GM23248 (cell line): ENCODE measurements at regions of chr15 and their contacts with region 1.

Region 1: GRCh38 chr15:78429477-78429876 is 8.5 kb upstream of the IREB2 start:
- DNase-seq: no peak
- H3K4me3 ChIP-seq: no peak overlapping the region
- H3K27ac ChIP-seq: no peak overlapping the region
- H3K4me1 ChIP-seq: no peaks in the 10 kb centered on the region
- H3K27me3 ChIP-seq: peaks cover 40% of the 10 kb centered on the region

Region 2: DNA sequence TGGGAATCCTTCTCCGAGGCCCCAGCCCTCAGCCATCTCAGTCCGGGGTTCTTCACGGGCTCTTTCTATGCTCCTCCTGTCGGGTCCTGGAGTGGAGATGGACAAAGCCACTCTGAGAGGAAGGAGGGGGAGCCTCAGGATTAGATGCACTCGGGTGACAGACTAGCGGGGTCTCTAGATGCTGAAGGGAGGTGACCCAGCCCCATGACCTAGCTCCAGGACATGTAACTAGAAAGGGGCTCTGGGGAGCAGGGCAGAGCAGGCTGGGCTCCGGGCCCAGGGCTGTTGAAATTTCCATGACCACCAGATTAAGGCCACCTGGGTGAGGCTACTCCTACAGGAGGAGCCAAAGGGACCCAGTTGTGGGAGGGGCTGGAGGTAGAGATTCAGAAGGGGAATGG is 115.3 kb before region 1 on chr15:
- in situ Hi-C with region 1: loop called (anchors 5 kb)
- DNase-seq: no peak
- H3K4me3 ChIP-seq: no peak overlapping the region
- H3K27ac ChIP-seq: no peak overlapping the region
- H3K4me1 ChIP-seq: no peaks in the 10 kb centered on the region
- H3K27me3 ChIP-seq: peaks cover 12% of the 10 kb centered on the region; the same call in 1 of the 2 replicates